ENCODE measurements at regions of chr6 and their contacts with region 1.

Region 1: DNA sequence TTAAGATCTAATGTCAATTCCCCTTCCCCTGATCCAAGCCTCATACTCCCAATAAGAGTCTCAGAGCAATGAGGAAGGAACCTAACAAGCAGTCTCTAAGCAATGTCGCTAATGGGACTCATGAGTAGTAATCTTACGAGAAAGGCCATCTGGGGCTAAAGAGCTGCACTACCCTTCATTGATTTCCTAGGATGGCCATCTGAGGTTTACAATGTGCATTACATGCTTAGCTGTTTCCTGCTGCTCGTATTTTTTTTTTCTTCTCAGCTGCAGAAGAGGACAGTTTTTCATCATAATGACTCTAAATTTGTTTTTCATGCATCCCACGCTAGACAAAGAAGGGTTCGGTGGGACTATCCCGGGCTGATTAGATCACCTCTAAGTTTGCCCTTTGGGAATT is 119.3 kb downstream of the LPA start:
- DNase-seq: no peak
- ATAC-seq: no peak
- H3K4me3 ChIP-seq: no peak overlapping the region
- H3K4me3 Mint-ChIP-seq: no peak overlapping the region
- H3K27ac ChIP-seq: no peak overlapping the region
- H3K27ac Mint-ChIP-seq: no peak overlapping the region
- H3K4me1 ChIP-seq: no peaks in the 10 kb centered on the region
- H3K4me1 Mint-ChIP-seq: no peaks in the 10 kb centered on the region
- H3K27me3 ChIP-seq: peaks cover 3 to 5% of the 10 kb centered on the region in 2 experiments
- H3K27me3 Mint-ChIP-seq: peaks cover 36% of the 10 kb centered on the region
- CTCF ChIP-seq: no peak

Region 2: GRCh38 chr6:160505970-160506369 is 38.8 kb before region 1 on chr6:
- CTCF ChIA-PET with region 1: no interaction called
- POLR2A ChIA-PET with region 1: no interaction called
- intact Hi-C with region 1: loop called in 1 of 2 experiments (anchors 5 kb)
- DNase-seq: no peak
- ATAC-seq: no peak
- H3K4me3 ChIP-seq: no peak overlapping the region
- H3K4me3 Mint-ChIP-seq: no peak overlapping the region
- H3K27ac ChIP-seq: no peak overlapping the region
- H3K27ac Mint-ChIP-seq: no peak overlapping the region
- H3K4me1 ChIP-seq: no peaks in the 10 kb centered on the region
- H3K4me1 Mint-ChIP-seq: no peaks in the 10 kb centered on the region
- H3K27me3 ChIP-seq: no peaks in the 10 kb centered on the region
- H3K27me3 Mint-ChIP-seq: no peaks in the 10 kb centered on the region
- CTCF ChIP-seq: no peak

Measured in CD4-positive, alpha-beta T cell (primary cell).